CD4-positive, alpha-beta memory T cell (primary cell): ENCODE measurements at regions of chr12 and their contacts with region 1.

Region 1: GRCh38 chr12:6470375-6471163 is at the start of gene VAMP1:
- DNase-seq: peak; percentile 95 to 99 (median 96)
- H3K4me3 ChIP-seq: peak within 1 kb of the TSS; percentile 74 to 76
- H3K4me3 Mint-ChIP-seq: peak within 1 kb of the TSS; percentile 86 to 97 (median 92)
- H3K27ac ChIP-seq: peak within 1 kb of the TSS; percentile 64
- H3K27ac Mint-ChIP-seq: peak within 1 kb of the TSS; percentile 90 to 97 (median 94)
- H3K4me1 ChIP-seq: peaks cover 46% of the 10 kb centered on the region
- H3K4me1 Mint-ChIP-seq: peaks cover 35 to 52% (median 48%) of the 10 kb centered on the region in 4 donors
- H3K27me3 ChIP-seq: no peaks in the 10 kb centered on the region
- H3K27me3 Mint-ChIP-seq: no peaks in the 10 kb centered on the region
- total RNA-seq, gene VAMP1: 97.7 to 101 TPM

Region 2: DNA sequence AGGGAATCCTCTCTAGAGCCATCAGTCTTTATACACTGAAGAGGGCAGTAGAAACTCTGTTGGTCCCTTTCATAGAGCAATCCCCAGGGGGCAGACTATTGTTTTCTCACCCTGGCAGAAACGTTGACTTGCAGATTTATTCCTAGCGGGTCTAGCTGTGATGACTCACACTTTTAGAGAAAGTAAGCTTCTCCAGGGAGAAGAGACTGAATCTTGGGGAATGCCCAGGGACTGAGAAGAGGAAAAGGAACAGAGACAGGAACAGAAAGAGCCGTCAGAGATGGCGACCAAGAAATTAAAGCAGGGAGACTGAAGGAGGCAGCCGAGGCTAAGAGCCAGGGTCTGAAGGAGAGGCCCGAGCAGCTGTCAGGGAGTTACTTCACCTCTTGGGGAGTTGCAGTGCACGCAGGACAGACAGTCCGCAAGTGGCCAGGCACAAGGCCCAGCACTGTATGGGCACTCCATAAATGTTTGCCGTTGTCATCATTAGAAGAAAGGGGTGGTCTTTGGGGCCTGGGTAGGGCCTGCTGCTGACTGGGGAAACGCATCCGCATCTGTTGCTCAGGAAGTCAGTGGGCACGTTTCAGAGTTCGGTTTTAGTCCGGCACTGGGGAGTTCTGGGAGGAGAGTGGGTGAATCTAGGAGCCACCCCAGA is 147.1 kb before region 1 on chr12:
- CTCF ChIA-PET with region 1: interaction called, 18 read pairs
- POLR2A ChIA-PET with region 1: interaction called, 6 read pairs
- intact Hi-C with region 1: loop called (anchors 1 kb)
- DNase-seq: peak; percentile 47 to 66 (median 52)
- H3K4me3 ChIP-seq: peak overlapping the region in 1 of 2 donors; percentile 3
- H3K4me3 Mint-ChIP-seq: peak overlapping the region; percentile 76 to 90 (median 82)
- H3K27ac ChIP-seq: no peak overlapping the region
- H3K27ac Mint-ChIP-seq: peak overlapping the region; percentile 80 to 96 (median 94)
- H3K4me1 ChIP-seq: peaks cover 32% of the 10 kb centered on the region
- H3K4me1 Mint-ChIP-seq: peaks cover 26 to 53% (median 34%) of the 10 kb centered on the region in 4 donors
- H3K27me3 ChIP-seq: no peaks in the 10 kb centered on the region
- H3K27me3 Mint-ChIP-seq: no peaks in the 10 kb centered on the region

Region 3: DNA sequence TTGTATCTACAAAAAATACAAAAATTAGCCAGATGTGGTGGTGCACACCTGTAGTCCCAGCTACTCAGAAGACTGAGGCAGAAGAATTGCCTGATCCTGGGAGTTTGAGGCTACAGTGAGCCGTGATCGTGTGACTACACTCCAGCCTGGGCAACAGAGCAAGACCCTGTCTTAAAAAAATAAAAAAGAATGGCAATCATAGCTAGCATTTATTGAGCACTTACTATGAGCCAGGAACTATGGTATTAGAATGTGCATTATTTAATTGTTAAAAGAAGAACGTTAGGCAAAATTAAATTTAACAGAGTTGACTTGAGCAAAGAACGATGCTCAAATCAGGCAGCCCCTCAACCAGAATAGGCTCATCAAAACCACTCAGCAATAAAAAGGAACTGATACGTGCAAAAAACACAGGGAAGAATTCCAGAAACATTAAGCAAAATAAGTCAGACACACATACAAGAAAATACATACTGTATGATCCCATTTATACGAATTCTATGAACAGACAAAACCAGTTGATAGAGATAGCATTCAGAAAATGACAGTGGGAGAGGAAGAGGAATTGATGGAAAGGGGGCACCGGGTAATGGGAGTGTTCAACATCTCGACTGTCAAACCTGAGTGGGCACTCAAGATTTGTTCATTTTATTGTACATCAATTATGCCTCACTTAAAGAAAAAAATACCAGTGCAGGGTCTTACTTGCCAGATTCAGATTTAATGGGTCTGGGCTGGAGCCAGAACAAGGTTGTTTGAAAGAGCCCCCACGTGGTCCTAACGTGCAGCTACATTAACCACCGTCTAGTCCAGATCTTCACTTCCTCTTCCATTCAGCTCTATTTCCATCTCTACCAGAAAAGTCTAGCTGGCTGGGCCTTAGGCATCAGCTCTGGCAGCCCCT is 103.3 kb before region 1 on chr12:
- CTCF ChIA-PET with region 1: interaction called, 11 read pairs
- POLR2A ChIA-PET with region 1: interaction called, 6 read pairs
- intact Hi-C with region 1: no loop called
- DNase-seq: peak; percentile 36 to 55 (median 48)
- H3K4me3 ChIP-seq: no peak overlapping the region
- H3K4me3 Mint-ChIP-seq: peak overlapping the region in 1 of 8 donors; percentile 5
- H3K27ac ChIP-seq: no peak overlapping the region
- H3K27ac Mint-ChIP-seq: peak overlapping the region in 5 of 7 donors; percentile 30 to 84 (median 79)
- H3K4me1 ChIP-seq: peaks cover 26% of the 10 kb centered on the region
- H3K4me1 Mint-ChIP-seq: peaks cover 8 to 38% (median 13%) of the 10 kb centered on the region in 4 donors
- H3K27me3 ChIP-seq: no peaks in the 10 kb centered on the region
- H3K27me3 Mint-ChIP-seq: no peaks in the 10 kb centered on the region

Region 4: DNA sequence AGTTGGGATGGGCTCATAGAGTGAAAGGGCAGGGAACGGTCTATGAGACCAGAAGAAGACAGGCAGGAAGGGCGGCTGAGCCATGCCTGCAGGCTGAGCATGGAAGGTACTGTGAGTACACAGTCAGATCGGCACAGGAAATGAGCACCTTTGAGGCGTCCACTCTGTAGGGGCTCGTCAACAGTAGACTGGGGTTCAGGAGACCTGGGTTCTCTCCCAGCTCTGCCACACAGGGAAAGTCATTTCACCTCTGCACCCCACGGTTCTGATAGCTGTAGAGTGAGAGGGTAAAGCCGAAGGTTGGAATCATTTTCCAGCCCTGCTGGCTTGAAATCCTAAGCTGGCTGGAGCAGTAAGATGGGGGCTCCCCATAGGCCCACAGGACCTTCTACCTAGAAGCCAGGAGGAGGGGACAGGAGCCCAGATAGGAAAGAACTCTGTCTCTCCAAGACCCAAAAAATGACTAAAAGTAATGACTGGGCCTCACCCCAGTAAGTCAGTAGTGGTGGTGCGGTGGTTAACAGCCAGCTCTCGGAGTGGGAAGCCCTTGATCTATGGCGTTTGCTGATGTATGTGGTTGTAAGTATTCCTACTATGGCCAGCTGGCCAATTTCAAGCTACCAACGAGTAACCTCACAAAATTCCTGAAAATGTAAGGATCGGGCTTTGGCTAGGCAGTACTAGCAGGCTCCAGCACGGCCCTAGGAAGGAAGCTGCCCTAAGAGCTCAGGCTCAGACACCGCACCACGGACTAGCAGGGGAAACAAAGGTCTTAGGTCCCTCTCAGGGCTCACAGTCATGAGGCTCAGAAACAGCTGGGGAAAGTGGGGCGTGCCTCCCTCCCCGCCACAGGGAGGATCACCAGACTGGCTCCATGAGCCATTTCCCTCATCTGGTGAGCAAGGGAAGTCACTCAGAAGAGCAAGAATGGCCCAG is 36.1 kb before region 1 on chr12:
- CTCF ChIA-PET with region 1: interaction called, 20 read pairs
- POLR2A ChIA-PET with region 1: interaction called, 728 read pairs
- intact Hi-C with region 1: no loop called
- DNase-seq: peak in 4 of 5 donors; percentile 24 to 58 (median 38)
- H3K4me3 ChIP-seq: no peak overlapping the region
- H3K4me3 Mint-ChIP-seq: peak overlapping the region in 7 of 8 donors; percentile 36 to 72 (median 58)
- H3K27ac ChIP-seq: no peak overlapping the region
- H3K27ac Mint-ChIP-seq: peak overlapping the region in 5 of 7 donors; percentile 78 to 90 (median 82)
- H3K4me1 ChIP-seq: peaks cover 29% of the 10 kb centered on the region
- H3K4me1 Mint-ChIP-seq: peaks cover 13 to 42% (median 28%) of the 10 kb centered on the region in 4 donors
- H3K27me3 ChIP-seq: no peaks in the 10 kb centered on the region
- H3K27me3 Mint-ChIP-seq: no peaks in the 10 kb centered on the region

Region 5: GRCh38 chr12:6451348-6452244 is 19.0 kb before region 1 on chr12 and contains the start of gene TAPBPL:
- CTCF ChIA-PET with region 1: interaction called, 247 read pairs
- POLR2A ChIA-PET with region 1: interaction called, 728 read pairs
- intact Hi-C with region 1: loop called (anchors 1 kb)
- DNase-seq: peak; percentile 85 to 94 (median 86)
- H3K4me3 ChIP-seq: peak within 1 kb of the TSS; percentile 80
- H3K4me3 Mint-ChIP-seq: peak within 1 kb of the TSS; percentile 96 to 100 (median 98)
- H3K27ac ChIP-seq: peak within 1 kb of the TSS; percentile 99
- H3K27ac Mint-ChIP-seq: peak within 1 kb of the TSS; percentile 95 to 99 (median 99)
- H3K4me1 ChIP-seq: peaks cover 68% of the 10 kb centered on the region
- H3K4me1 Mint-ChIP-seq: peaks cover 45 to 79% (median 64%) of the 10 kb centered on the region in 4 donors
- H3K27me3 ChIP-seq: no peaks in the 10 kb centered on the region
- H3K27me3 Mint-ChIP-seq: no peaks in the 10 kb centered on the region
- total RNA-seq, gene TAPBPL: 66.4 to 66.9 TPM

Region 6: GRCh38 chr12:6500466-6500865 is 29.9 kb after region 1 on chr12:
- CTCF ChIA-PET with region 1: interaction called, 10 read pairs
- POLR2A ChIA-PET with region 1: interaction called, 76 read pairs
- intact Hi-C with region 1: no loop called
- DNase-seq: no peak
- H3K4me3 ChIP-seq: no peak overlapping the region
- H3K4me3 Mint-ChIP-seq: no peak overlapping the region
- H3K27ac ChIP-seq: no peak overlapping the region
- H3K27ac Mint-ChIP-seq: peak overlapping the region in 1 of 7 donors; percentile 13
- H3K4me1 ChIP-seq: peaks cover 15% of the 10 kb centered on the region
- H3K4me1 Mint-ChIP-seq: peaks cover 9 to 13% (median 10%) of the 10 kb centered on the region in 4 donors
- H3K27me3 ChIP-seq: no peaks in the 10 kb centered on the region
- H3K27me3 Mint-ChIP-seq: no peaks in the 10 kb centered on the region

Region 7: DNA sequence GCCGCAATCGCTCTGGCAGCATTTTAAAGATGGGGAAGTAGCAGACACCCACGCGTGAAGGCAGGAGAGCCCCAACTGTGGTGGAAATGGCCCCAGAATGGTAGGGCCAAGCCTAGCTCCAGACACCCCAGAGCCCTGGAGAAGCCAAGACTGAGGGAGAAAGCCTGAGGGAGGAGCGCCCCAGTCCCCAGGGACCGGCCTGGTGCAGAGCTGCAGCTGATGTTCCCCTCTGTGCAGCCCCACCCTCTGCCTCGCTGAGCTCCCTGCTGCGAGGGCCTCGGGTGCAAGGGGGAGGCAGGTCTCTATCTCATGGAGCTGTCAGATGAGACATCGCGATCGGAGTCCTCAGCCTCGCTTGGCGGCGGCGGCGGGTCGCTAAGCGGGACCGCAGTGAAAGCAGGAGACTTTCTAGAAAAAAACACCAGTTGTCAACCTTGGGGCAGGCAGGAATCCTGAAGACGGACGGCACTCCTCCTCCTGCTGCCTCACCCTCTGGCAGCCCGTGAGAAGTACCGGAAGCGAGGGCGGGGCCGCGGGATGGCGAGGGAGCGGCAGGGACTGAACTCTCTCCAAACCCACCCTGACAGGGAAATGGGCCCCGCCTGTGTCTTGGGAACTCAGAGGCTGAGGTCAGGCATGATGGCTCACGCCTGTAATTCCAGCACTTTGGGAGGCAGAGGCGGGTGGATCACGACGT is 69.8 kb after region 1 on chr12:
- CTCF ChIA-PET with region 1: interaction called, 134 read pairs
- POLR2A ChIA-PET with region 1: interaction called, 237 read pairs
- intact Hi-C with region 1: no loop called
- DNase-seq: peak; percentile 30 to 63 (median 33)
- H3K4me3 ChIP-seq: peak overlapping the region in 1 of 2 donors; percentile 22
- H3K4me3 Mint-ChIP-seq: peak overlapping the region in 7 of 8 donors; percentile 43 to 87 (median 80)
- H3K27ac ChIP-seq: peak overlapping the region; percentile 37
- H3K27ac Mint-ChIP-seq: peak overlapping the region; percentile 80 to 93 (median 89)
- H3K4me1 ChIP-seq: peaks cover 70% of the 10 kb centered on the region
- H3K4me1 Mint-ChIP-seq: peaks cover 31 to 61% (median 51%) of the 10 kb centered on the region in 4 donors
- H3K27me3 ChIP-seq: no peaks in the 10 kb centered on the region
- H3K27me3 Mint-ChIP-seq: no peaks in the 10 kb centered on the region